ENCODE measurements at regions of chrX and their contacts with region 1.

Region 1: GRCh38 chrX:84907324-84907968 is 96.2 kb upstream of the APOOL start:
- DNase-seq: peak in 1 of 2 experiments; percentile 2
- H3K4me3 ChIP-seq: no peak overlapping the region
- H3K4me3 Mint-ChIP-seq: no peak overlapping the region
- H3K27ac Mint-ChIP-seq: no peak overlapping the region
- H3K4me1 ChIP-seq: no peaks in the 10 kb centered on the region
- H3K4me1 Mint-ChIP-seq: no peaks in the 10 kb centered on the region
- H3K27me3 ChIP-seq: no peaks in the 10 kb centered on the region
- H3K27me3 Mint-ChIP-seq: no peaks in the 10 kb centered on the region
- CTCF ChIP-seq: no peak

Region 2: DNA sequence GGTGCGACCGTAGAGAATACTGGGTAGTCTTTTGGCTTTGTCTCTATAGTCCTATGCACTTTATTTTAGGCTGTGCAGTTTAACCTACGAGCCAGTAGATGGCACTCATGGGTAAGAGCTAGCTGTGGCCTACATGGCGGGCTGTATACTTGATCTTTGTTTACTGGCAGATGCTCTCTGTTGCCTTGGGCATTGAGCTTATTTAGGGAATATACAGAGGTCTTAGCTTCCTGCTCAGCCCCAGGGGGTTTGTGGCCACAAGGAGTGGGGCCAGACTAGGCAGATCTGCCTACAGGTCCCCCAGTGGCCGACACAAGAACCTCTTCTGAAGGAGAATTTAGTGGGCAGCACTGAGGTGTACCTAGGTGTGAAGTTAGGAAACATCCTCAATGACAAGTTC is 177.6 kb before region 1 on chrX:
- CTCF ChIA-PET with region 1: interaction called, 3 read pairs
- POLR2A ChIA-PET with region 1: no interaction called
- intact Hi-C with region 1: loop called (anchors 1 kb)
- DNase-seq: peak; percentile 29 to 36
- H3K4me3 ChIP-seq: no peak overlapping the region
- H3K4me3 Mint-ChIP-seq: no peak overlapping the region
- H3K27ac Mint-ChIP-seq: no peak overlapping the region
- H3K4me1 ChIP-seq: peaks cover 5% of the 10 kb centered on the region
- H3K4me1 Mint-ChIP-seq: peaks cover 5% of the 10 kb centered on the region
- H3K27me3 ChIP-seq: no peaks in the 10 kb centered on the region
- H3K27me3 Mint-ChIP-seq: no peaks in the 10 kb centered on the region
- CTCF ChIP-seq: peak; percentile 47 to 66

Region 3: GRCh38 chrX:84956304-84956703 is 48.9 kb after region 1 on chrX:
- CTCF ChIA-PET with region 1: no interaction called
- POLR2A ChIA-PET with region 1: no interaction called
- intact Hi-C with region 1: no loop called
- DNase-seq: no peak
- H3K4me3 ChIP-seq: no peak overlapping the region
- H3K4me3 Mint-ChIP-seq: no peak overlapping the region
- H3K27ac Mint-ChIP-seq: no peak overlapping the region
- H3K4me1 ChIP-seq: no peaks in the 10 kb centered on the region
- H3K4me1 Mint-ChIP-seq: no peaks in the 10 kb centered on the region
- H3K27me3 ChIP-seq: no peaks in the 10 kb centered on the region
- H3K27me3 Mint-ChIP-seq: no peaks in the 10 kb centered on the region
- CTCF ChIP-seq: no peak

Measured in Caco-2 (cell line).